K562 (cell line): ENCODE measurements at regions of chrX and their contacts with region 1.

Region 1: GRCh38 chrX:14095702-14096101 is 66.0 kb upstream of the GEMIN8 start:
- DNase-seq: peak; percentile 28 to 65 (median 37)
- ATAC-seq: peak; percentile 97
- H3K4me3 ChIP-seq: no peak overlapping the region
- H3K27ac ChIP-seq: no peak overlapping the region
- H3K4me1 ChIP-seq: no peaks in the 10 kb centered on the region; a peak in 1 of 5 replicates
- H3K27me3 ChIP-seq: no peaks in the 10 kb centered on the region; a peak in 1 of 5 replicates
- CTCF ChIP-seq: peak; percentile 64 to 79 (median 76)
- EP300 ChIP-seq: no peak
- POLR2A ChIP-seq: no peak
- RAD21 ChIP-seq: peak; percentile 62 to 79

Region 2: GRCh38 chrX:14528629-14529289 is 433.1 kb after region 1 on chrX:
- CTCF ChIA-PET with region 1: no interaction called
- POLR2A ChIA-PET with region 1: no interaction called
- in situ Hi-C with region 1: no loop called
- intact Hi-C with region 1: loop called (anchors 2 kb)
- DNase-seq: peak; percentile 10 to 42 (median 20)
- ATAC-seq: peak; percentile 54; the same call in 1 of the 3 replicates
- H3K4me3 ChIP-seq: no peak overlapping the region
- H3K27ac ChIP-seq: no peak overlapping the region
- H3K4me1 ChIP-seq: no peaks in the 10 kb centered on the region
- H3K27me3 ChIP-seq: no peaks in the 10 kb centered on the region
- CTCF ChIP-seq: peak; percentile 29 to 44 (median 41); a peak in 5 of 6 replicates
- EP300 ChIP-seq: no peak
- POLR2A ChIP-seq: no peak
- RAD21 ChIP-seq: peak; percentile 47 to 63

Region 3: GRCh38 chrX:15143050-15143824 is 1047.5 kb after region 1 on chrX:
- CTCF ChIA-PET with region 1: no interaction called
- POLR2A ChIA-PET with region 1: no interaction called
- in situ Hi-C with region 1: no loop called
- intact Hi-C with region 1: loop called (anchors 1 kb)
- DNase-seq: peak; percentile 25 to 60 (median 26)
- ATAC-seq: peak; percentile 93
- H3K4me3 ChIP-seq: no peak overlapping the region
- H3K27ac ChIP-seq: no peak overlapping the region
- H3K4me1 ChIP-seq: no peaks in the 10 kb centered on the region
- H3K27me3 ChIP-seq: no peaks in the 10 kb centered on the region
- CTCF ChIP-seq: peak; percentile 58 to 62 (median 60)
- EP300 ChIP-seq: no peak
- POLR2A ChIP-seq: no peak
- RAD21 ChIP-seq: peak; percentile 58 to 63

Region 4: DNA sequence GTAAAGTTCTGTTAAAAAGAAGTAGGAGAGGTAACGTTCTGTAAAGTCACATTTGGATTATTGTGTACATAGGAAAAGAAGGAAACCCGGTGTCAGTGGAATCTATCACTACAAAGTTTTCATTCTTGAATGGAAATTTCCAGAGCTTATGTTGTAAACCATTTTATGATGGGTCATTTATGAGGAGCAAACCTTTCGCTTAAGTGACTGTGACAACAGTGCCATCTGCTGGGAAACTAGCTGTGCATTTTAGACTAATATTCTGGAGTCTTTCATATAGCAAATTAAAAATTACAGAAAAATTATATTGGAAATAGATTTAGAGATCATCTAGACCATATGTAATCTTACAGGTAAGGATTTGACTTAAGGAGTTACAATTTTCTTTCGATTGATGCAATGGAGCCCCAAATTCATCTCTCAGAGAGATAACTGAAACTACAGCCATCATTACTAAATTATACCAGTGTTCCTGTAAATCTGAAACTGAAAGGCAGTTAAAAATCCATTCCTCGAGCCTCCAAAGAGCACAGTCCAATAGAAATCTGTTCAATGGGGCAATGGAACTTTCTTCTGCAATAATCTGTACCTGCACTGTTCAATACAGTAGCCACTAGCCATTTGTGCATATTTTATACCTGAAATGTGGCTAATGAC is 1147.3 kb after region 1 on chrX:
- CTCF ChIA-PET with region 1: interaction called, 3 read pairs
- POLR2A ChIA-PET with region 1: no interaction called
- in situ Hi-C with region 1: no loop called
- intact Hi-C with region 1: loop called (anchors 1 kb)
- DNase-seq: peak; percentile 16 to 62 (median 24)
- ATAC-seq: peak; percentile 75
- H3K4me3 ChIP-seq: no peak overlapping the region
- H3K27ac ChIP-seq: no peak overlapping the region
- H3K4me1 ChIP-seq: no peaks in the 10 kb centered on the region
- H3K27me3 ChIP-seq: no peaks in the 10 kb centered on the region
- CTCF ChIP-seq: peak in 2 of 3 experiments; percentile 52 to 72; a peak in 4 of 6 replicates
- EP300 ChIP-seq: no peak
- POLR2A ChIP-seq: no peak
- RAD21 ChIP-seq: peak; percentile 55 to 75